ENCODE measurements at regions of chr18 and their contacts with region 1.

Region 1: DNA sequence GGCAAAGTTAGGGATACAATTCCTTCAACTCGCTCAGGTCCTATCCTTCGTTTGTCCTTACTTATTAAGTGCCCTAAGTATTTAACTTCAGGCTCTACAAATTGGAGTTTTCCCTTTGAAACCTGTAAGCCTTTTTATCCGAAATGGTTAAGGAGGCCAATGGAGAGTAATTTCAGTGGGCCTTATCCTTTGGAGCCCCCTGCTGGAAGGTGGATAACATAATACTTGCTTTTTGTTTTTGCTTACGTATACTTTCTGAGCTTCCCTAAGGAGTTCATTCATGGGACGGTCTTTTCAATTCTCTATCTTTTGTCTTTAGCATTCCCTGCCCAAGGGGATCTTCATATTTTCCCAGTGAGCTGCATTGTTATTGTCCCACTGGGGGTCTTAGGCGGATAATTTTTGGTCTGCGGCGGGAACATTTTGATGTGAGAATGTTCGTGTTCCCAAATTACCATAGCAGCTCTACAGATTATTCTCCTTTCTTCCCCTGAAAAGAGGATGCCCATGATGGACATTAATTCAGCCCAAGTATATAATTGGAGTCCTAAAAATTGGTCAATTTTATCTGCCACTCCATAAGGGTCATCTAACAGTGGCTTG is 34.4 kb upstream of the TRAPPC8 start:
- DNase-seq: no peak
- H3K4me3 ChIP-seq: no peak overlapping the region
- H3K27me3 ChIP-seq: no peaks in the 10 kb centered on the region
- CTCF ChIP-seq: peak; percentile 68

Region 2: DNA sequence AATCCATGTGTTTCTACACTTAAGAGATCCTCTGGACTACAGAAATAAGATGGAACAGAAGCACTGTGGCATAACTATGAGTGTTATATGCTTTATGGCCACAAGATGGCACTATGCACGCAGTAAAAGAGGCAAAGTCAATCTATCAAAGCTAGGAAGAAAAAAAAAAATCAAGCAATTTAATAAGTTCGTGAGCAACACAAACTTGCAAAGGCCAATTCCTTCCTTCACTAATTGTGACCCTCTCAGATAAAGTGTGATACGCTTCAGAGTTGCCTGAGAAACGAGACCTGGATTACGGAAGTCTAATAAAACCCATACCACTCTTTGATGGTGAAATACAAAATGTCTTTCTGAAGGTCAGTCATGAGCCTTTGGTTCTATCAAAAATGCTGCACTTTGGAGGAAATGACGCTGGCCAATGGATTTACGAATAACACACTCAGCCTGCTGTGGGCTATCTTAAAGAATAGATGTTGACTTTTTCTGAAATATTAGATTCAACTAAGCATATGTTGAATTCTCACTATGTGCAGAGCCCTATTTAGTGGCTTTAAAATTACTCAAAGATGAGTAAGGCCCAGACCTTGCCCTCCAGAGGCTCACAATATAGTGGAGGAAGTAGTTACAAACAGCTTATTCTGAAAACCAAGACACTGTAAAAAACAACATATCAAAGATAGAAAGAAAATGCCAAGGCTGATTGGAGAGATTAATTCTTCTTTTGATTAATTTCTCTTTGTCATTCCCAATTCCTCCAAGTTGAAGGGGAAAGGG is 421.2 kb before region 1 on chr18:
- CTCF ChIA-PET with region 1: interaction called, 13 read pairs
- POLR2A ChIA-PET with region 1: no interaction called
- DNase-seq: peak; percentile 26
- H3K4me3 ChIP-seq: no peak overlapping the region
- H3K27me3 ChIP-seq: no peaks in the 10 kb centered on the region
- CTCF ChIP-seq: peak; percentile 69

Region 3: DNA sequence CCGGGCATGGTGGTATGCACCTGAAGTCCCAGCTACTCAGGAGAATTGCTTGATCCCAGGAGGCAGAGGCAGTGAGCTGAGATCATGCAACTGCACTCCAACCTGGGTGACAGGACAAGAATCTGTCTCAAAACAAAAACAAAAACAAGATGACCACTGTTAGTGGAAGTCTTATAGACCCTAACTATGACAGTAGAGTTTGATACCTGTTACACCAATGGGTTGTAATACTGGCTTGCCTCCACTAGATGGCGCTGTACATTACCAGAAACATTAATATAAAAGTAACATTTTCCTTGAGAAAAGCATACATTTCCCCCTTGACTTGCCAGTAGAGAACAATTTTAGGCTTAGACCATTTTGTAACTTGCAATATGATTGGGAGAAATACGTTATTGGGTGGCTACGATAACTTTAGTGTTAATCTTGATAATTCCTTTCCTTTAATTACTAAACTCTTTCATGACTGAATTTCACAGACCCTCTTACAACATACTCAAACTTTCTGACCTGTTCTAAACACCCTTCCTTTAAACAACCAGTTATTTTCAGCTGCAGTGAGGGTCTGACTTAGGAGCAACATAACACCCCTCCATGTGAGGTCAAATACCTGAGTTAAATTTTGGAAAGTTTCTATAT is 236.2 kb before region 1 on chr18:
- CTCF ChIA-PET with region 1: interaction called, 22 read pairs
- POLR2A ChIA-PET with region 1: no interaction called
- DNase-seq: no peak
- H3K4me3 ChIP-seq: no peak overlapping the region
- H3K27me3 ChIP-seq: no peaks in the 10 kb centered on the region
- CTCF ChIP-seq: peak; percentile 73

Region 4: DNA sequence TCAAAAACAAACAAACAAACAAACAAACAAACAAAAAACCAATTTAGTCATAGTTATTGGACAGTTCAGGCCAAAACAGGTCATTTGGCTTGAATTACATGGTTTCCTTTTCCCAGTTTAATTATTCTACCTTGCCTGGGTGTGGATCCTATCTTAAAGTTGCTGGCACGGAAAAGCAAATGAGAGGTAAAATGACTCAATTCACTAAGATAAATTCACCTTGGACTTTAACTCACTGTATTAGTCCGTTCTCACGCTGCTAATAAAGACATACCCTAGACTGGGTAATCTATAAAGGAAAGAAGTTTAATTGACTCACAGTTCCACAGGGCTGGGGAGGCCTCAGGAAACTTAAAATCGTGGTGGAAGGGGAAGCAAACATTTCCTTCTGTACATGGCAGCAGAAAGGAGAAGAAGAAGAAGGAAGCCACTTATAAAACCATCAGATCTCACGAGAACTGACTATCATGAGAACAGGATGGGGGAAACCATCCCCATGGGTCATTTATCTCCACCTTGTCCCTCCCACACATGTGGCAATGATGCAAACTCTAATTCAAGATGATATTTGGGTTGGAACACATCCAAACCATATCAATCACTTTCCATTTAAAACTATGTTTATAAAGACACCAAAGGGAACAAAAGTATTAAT is 11.9 kb before region 1 on chr18:
- CTCF ChIA-PET with region 1: interaction called, 10 read pairs
- POLR2A ChIA-PET with region 1: no interaction called
- DNase-seq: no peak
- H3K4me3 ChIP-seq: no peak overlapping the region
- H3K27me3 ChIP-seq: no peaks in the 10 kb centered on the region
- CTCF ChIP-seq: no peak

Region 5: GRCh38 chr18:32317651-32318050 is 340.3 kb after region 1 on chr18:
- CTCF ChIA-PET with region 1: no interaction called
- POLR2A ChIA-PET with region 1: no interaction called
- DNase-seq: no peak
- H3K4me3 ChIP-seq: no peak overlapping the region
- H3K27me3 ChIP-seq: no peaks in the 10 kb centered on the region
- CTCF ChIP-seq: no peak

Measured in BJ (cell line).